Activated B cell treated with CpG ODN at 0.5 μM for 24 hours (primary cell): ENCODE measurements at regions of chr4 and their contacts with region 1.

Region 1: GRCh38 chr4:152779513-152780266 is at the starts of genes ARFIP1 and TIGD4:
- DNase-seq: peak; percentile 93
- ATAC-seq: peak; percentile 88
- H3K4me3 Mint-ChIP-seq: peak within 1 kb of the TSS; percentile 97
- H3K27ac Mint-ChIP-seq: peak within 1 kb of the TSS; percentile 92
- H3K4me1 Mint-ChIP-seq: peaks cover 41% of the 10 kb centered on the region
- H3K27me3 Mint-ChIP-seq: no peaks in the 10 kb centered on the region
- CTCF ChIP-seq: no peak
- total RNA-seq, gene ARFIP1: 16.8 and 19.5 TPM in 2 replicates
- total RNA-seq, gene TIGD4: 0.24 and 0.44 TPM in 2 replicates

Region 2: DNA sequence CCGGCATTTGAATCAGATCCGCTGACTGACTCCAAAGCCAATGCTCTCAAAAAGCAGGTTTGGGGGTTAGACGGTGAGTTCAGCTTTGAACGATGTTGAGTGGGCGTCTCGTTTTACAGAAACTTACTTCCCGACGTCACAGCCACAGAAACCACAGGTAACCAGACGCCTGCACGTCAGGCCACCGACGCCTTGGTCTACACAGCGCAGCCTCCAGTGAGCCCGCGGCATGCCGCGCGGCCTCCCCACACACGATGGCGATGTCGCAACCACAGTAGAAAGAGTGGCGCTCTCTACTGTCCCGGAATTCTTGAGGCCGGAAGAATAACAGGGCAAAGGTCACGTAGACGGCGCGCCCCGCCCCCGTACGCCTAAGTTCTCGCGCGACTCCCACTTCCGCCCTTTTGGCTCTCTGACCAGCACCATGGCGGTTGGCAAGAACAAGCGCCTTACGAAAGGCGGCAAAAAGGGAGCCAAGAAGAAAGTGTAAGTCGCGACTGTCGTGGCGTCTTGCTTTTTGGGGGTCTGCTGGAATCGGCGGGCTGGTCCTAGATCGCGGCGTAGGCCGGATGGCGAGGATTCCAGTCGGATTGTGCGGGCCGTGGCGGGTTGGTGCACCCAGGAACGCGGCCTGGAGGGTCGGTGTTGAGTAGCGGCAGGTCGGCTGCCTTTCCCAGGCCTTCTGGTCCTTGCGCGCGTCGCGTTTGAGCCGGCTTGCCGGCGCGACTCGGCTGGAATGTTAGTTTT is 1680.3 kb before region 1 on chr4 and contains the start of gene RPS3A:
- CTCF ChIA-PET with region 1: no interaction called
- POLR2A ChIA-PET with region 1: no interaction called
- intact Hi-C with region 1: loop called (anchors 1 kb)
- DNase-seq: peak; percentile 99
- ATAC-seq: peak; percentile 94
- H3K4me3 Mint-ChIP-seq: peak within 1 kb of the TSS; percentile 99
- H3K27ac Mint-ChIP-seq: peak within 1 kb of the TSS; percentile 98
- H3K4me1 Mint-ChIP-seq: peaks cover 40% of the 10 kb centered on the region
- H3K27me3 Mint-ChIP-seq: peaks cover 4% of the 10 kb centered on the region
- CTCF ChIP-seq: peak; percentile 88
- total RNA-seq, gene RPS3A: 3,089 and 3,656 TPM in 2 replicates

Region 3: DNA sequence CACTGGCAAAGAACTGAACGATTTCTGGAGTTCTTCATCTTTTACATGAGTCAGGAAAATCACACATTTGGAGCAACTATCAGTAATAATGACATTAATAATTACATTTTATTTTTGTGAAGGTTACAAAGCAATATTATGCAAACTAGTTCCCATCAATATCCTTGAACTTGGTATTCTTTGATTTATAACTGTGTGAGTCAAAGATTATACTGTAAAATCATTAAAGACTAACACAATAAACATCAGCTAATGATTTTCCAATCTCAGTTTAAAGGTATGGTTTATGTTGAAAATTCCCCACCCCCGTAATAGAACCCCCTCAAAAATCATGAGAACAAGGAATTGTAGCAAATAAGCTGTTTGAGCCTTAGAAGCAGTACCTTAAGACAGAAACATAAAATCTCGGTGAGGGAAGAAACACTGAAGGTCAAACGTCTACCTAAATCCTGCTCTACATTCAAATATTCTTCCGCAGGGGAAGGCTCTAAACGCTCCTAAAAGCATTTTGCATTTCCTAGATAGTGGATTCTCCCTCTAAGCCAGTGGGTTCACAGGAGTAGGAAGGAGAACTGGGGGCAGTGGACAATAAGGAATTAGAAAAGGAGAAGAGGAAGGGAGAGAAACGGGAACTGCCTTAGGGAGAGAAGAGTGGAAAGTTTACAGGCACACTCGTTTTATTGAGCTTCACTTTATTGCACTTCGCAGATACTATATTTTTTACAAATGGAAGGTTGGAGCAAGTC is 1432.0 kb before region 1 on chr4:
- CTCF ChIA-PET with region 1: no interaction called
- POLR2A ChIA-PET with region 1: no interaction called
- intact Hi-C with region 1: no loop called
- DNase-seq: no peak
- ATAC-seq: no peak
- H3K4me3 Mint-ChIP-seq: no peak overlapping the region
- H3K27ac Mint-ChIP-seq: no peak overlapping the region
- H3K4me1 Mint-ChIP-seq: no peaks in the 10 kb centered on the region
- H3K27me3 Mint-ChIP-seq: no peaks in the 10 kb centered on the region
- CTCF ChIP-seq: no peak

Region 4: GRCh38 chr4:152340818-152341217 is 438.9 kb before region 1 on chr4:
- CTCF ChIA-PET with region 1: no interaction called
- POLR2A ChIA-PET with region 1: interaction called, 11 read pairs
- intact Hi-C with region 1: no loop called
- DNase-seq: no peak
- ATAC-seq: no peak
- H3K4me3 Mint-ChIP-seq: no peak overlapping the region
- H3K27ac Mint-ChIP-seq: no peak overlapping the region
- H3K4me1 Mint-ChIP-seq: no peaks in the 10 kb centered on the region
- H3K27me3 Mint-ChIP-seq: no peaks in the 10 kb centered on the region
- CTCF ChIP-seq: no peak

Region 5: GRCh38 chr4:152679414-152680281 is 100.0 kb before region 1 on chr4 and contains the start of gene TMEM154:
- CTCF ChIA-PET with region 1: no interaction called
- POLR2A ChIA-PET with region 1: no interaction called
- intact Hi-C with region 1: loop called (anchors 5 kb)
- DNase-seq: peak; percentile 66
- ATAC-seq: peak; percentile 83
- H3K4me3 Mint-ChIP-seq: peak within 1 kb of the TSS; percentile 95
- H3K27ac Mint-ChIP-seq: peak within 1 kb of the TSS; percentile 96
- H3K4me1 Mint-ChIP-seq: peaks cover 84% of the 10 kb centered on the region
- H3K27me3 Mint-ChIP-seq: no peaks in the 10 kb centered on the region
- CTCF ChIP-seq: no peak
- total RNA-seq, gene TMEM154: 47.5 and 59.9 TPM in 2 replicates

Region 6: DNA sequence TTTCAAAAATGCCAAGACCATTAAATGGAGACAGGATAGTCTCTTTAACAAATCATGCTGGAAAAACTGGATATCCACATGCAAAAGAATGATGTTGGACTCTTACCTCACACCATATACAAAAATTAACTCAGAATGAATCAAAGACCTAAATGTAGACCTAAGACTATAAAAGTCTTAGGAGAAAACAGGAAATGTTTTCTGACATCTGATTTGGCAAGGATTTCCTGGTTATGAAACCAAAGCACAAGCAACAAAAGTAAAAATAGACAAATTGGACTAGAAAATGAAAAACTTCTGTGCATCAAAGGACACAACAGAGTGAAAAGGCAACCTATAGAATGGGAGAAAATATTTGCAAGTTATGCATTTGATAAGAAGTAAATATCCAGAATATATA is 37.6 kb after region 1 on chr4:
- CTCF ChIA-PET with region 1: no interaction called
- POLR2A ChIA-PET with region 1: no interaction called
- intact Hi-C with region 1: no loop called
- DNase-seq: no peak
- ATAC-seq: no peak
- H3K4me3 Mint-ChIP-seq: peak overlapping the region; percentile 48
- H3K27ac Mint-ChIP-seq: no peak overlapping the region
- H3K4me1 Mint-ChIP-seq: peaks cover 26% of the 10 kb centered on the region
- H3K27me3 Mint-ChIP-seq: no peaks in the 10 kb centered on the region
- CTCF ChIP-seq: no peak

Region 7: GRCh38 chr4:152910521-152910920 is 130.8 kb after region 1 on chr4:
- CTCF ChIA-PET with region 1: no interaction called
- POLR2A ChIA-PET with region 1: no interaction called
- intact Hi-C with region 1: no loop called
- DNase-seq: no peak
- ATAC-seq: no peak
- H3K4me3 Mint-ChIP-seq: no peak overlapping the region
- H3K27ac Mint-ChIP-seq: no peak overlapping the region
- H3K4me1 Mint-ChIP-seq: no peaks in the 10 kb centered on the region
- H3K27me3 Mint-ChIP-seq: no peaks in the 10 kb centered on the region
- CTCF ChIP-seq: no peak

Region 8: DNA sequence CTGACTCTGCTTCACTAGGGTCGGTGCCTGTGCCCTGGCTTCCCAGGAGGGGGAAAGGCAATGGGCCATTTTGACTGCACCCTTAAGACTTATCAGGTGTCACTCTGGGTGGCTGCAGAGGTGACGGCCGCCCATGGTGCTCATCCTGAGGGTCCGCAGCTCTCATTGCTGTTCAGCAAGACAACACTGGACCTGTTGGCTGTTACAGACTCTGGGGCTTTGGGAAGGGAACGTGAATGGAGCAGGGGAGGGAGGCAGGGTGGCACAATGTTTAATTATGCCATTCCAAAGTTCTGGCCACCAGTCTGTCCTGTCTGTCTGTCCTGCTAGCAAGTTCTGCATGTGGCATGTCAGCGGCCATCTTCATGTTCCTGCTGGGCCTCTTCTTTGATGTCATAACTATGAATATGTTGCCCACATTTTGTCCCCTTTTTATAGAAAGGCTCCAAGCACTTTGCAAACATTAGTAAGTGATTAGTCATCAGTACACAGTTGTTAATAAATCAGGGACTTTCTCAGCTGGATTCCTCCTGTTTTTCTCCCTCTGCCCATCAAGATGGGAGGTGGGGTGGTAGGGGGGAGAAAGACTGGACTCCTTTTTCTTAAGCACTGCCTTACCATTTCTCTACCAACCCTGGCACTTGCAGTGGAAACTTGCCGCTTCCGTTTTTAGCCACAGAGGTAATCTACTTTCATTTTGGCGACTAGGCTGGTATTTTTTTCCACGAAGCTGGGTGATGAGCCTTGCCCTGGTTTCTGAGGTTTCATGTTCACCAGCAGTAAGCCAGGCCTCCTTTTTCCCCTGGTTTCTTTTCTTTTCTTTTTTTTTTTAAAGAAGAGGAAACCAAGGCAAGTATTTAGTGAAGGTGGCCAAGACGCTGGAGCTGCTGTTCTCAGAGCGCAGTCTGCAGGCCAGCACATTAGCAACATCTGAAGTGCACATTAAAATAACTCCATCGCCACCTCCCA is 335.9 kb after region 1 on chr4:
- CTCF ChIA-PET with region 1: no interaction called
- POLR2A ChIA-PET with region 1: no interaction called
- intact Hi-C with region 1: loop called (anchors 2 kb)
- DNase-seq: peak; percentile 31
- ATAC-seq: peak; percentile 84
- H3K4me3 Mint-ChIP-seq: peak overlapping the region; percentile 65
- H3K27ac Mint-ChIP-seq: no peak overlapping the region
- H3K4me1 Mint-ChIP-seq: peaks cover 3% of the 10 kb centered on the region
- H3K27me3 Mint-ChIP-seq: no peaks in the 10 kb centered on the region
- CTCF ChIP-seq: no peak